ENCODE measurements at regions of chr9 and their contacts with region 1.

Region 1: DNA sequence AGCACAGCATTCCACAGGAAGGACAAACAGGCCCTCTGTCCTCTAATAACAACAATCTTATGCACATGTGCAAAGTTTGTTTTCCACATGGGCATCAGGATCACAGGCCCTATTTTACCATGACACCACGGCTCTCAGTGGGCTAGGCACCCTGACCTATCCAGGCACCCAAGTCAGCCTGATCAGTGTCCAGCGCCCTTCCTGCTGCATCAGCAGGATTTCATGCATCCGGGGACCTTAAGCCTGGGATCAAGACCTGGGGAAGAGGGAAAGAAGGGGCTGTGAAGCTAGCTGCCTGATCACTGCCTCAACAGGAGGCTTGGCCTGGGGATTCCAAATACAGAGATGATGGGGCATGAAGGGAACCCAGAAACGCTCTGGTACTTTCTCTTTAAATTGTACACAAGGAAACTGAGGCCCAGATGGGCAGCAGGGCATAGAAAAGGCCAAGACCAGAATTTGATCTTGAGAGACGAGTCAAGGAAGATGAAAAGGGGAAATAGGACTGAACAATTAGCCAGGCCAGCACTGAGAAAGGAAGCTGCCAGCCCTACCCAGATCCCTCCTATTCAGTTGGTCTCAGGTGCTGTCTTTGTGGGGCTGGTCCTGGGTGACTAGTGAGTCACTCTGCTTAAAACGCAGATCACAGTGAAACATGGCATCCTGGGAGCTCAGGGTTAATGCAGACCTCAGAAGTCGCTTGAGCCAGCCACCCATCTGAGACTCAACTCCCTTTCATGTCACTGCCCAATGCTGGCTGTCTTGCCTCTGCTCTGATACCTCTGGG is 57.9 kb downstream of the SHB start:
- DNase-seq: no peak

Region 2: DNA sequence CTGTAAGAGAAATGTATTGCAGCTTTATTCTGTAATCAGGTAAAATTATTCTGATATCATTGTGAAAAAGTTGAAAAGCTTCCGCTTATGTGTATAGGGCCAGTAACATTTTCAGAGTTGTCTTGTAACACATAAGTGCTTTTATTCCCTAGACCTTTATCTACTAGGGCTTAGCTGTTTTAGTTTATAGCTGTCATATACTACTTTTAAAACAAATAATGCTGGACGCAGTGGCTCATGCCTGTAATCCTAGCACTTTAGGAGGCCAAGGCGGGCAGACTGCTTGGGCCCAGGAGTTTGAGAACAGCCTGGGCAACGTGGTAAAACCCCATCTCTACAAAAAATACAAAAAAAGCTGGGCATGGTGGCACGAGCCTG is 140.3 kb before region 1 on chr9:
- intact Hi-C with region 1: no loop called
- DNase-seq: no peak

Region 3: GRCh38 chr9:37963936-37964739 is 47.0 kb before region 1 on chr9:
- intact Hi-C with region 1: no loop called
- DNase-seq: peak; percentile 61 to 95 (median 83)

Region 4: DNA sequence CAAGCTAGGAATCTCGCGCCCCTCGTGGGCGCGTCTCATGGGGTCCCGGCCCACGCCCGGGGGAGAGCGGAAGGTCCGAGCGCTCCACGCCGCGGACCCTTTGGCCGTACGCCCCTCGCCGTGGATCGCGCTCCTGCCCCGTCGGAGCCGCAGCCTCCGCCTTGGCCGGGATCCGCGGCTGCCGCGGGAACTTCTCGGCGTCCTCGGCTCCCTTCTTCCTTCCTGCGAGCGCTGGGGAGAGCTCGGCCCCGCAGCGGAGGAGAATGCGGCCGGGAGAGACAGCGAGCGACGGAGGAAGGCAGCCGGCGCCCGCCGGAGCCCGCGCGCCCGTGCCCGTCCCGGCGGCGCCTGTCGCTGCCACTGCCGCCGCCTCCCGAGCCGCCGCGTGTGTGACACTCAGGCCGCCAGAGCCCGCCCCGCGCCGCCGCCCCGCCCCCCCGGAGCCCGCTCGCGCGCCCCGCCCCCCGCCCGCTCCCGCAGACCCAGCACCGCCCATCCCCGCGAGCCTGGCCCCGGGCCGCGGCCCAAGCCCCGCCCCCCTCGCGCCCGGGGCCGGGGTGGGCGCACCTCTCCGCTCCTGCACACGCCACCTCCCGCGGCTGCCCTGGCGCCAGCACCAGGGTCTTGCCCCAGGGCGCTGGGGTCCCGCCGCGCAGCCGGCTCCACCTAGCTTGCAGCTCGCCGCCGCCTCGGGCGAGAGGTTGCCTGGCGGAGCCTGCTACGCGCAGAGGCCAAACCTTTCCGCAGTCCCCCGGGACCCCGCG is 57.9 kb after region 1 on chr9 and contains the start of gene SHB:
- intact Hi-C with region 1: loop called (anchors 5 kb)
- DNase-seq: peak; percentile 39 to 94 (median 86)